HepG2 (cell line): ENCODE measurements at regions of chr14 and their contacts with region 1.

Region 1: GRCh38 chr14:65412032-65412846 is at the start of gene FUT8:
- DNase-seq: peak; percentile 81
- ATAC-seq: peak; percentile 92
- H3K4me3 ChIP-seq: peak within 1 kb of the TSS; percentile 86 to 94 (median 93)
- H3K27ac ChIP-seq: peak within 1 kb of the TSS; percentile 59
- H3K4me1 ChIP-seq: peaks cover 23% of the 10 kb centered on the region
- H3K27me3 ChIP-seq: no peaks in the 10 kb centered on the region
- CTCF ChIP-seq: peak; percentile 88
- EP300 ChIP-seq: 0 out of 4 replicates have a peak, but pooled peaks of 1 of the 2 experiments have one; percentile 13
- POLR2A ChIP-seq: peak; percentile 63 to 70; a peak in 3 of 4 replicates
- RAD21 ChIP-seq: peak; percentile 91
- total RNA-seq, gene FUT8: 14.9 and 17.5 TPM in 2 replicates

Region 2: DNA sequence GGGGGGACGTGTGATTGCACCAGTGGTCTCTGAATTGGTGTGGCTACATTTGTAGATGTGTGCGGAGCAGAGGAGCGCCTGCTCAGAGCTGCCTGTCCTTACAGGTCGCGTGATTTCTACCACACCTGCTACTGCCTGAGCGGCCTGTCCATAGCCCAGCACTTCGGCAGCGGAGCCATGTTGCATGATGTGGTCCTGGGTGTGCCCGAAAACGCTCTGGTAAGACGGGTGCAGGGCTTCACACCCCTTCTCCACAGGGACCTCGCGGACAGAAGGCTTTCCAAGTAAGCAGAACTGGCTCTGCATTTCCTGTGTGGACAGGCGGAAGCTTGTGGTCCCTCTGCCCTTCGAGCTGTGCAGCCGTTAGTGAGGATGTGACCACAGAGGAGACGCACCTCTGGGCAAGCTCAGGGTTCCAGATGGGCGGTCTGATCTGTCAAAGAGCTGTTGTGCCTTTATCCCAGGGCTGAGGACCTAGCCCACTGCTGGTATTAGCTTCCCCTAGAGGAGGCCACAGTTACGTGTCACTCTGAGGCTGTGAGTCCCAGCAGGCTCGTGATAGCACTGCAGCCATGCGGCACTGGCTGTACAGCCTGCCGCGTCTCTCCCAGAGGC is 357.7 kb before region 1 on chr14:
- CTCF ChIA-PET with region 1: no interaction called
- POLR2A ChIA-PET with region 1: no interaction called
- in situ Hi-C with region 1: no loop called
- intact Hi-C with region 1: no loop called
- DNase-seq: no peak
- ATAC-seq: peak; percentile 61
- H3K4me3 ChIP-seq: no peak overlapping the region
- H3K27ac ChIP-seq: no peak overlapping the region
- H3K4me1 ChIP-seq: no peaks in the 10 kb centered on the region
- H3K27me3 ChIP-seq: no peaks in the 10 kb centered on the region
- CTCF ChIP-seq: no peak
- EP300 ChIP-seq: no peak
- POLR2A ChIP-seq: no peak
- RAD21 ChIP-seq: no peak

Region 3: GRCh38 chr14:65131301-65131701 is 280.9 kb before region 1 on chr14:
- CTCF ChIA-PET with region 1: no interaction called
- POLR2A ChIA-PET with region 1: no interaction called
- in situ Hi-C with region 1: no loop called
- intact Hi-C with region 1: no loop called
- DNase-seq: no peak
- ATAC-seq: no peak
- H3K4me3 ChIP-seq: no peak overlapping the region
- H3K27ac ChIP-seq: no peak overlapping the region
- H3K4me1 ChIP-seq: peaks cover 29% of the 10 kb centered on the region
- H3K27me3 ChIP-seq: no peaks in the 10 kb centered on the region
- CTCF ChIP-seq: no peak
- EP300 ChIP-seq: no peak
- POLR2A ChIP-seq: no peak
- RAD21 ChIP-seq: no peak

Region 4: DNA sequence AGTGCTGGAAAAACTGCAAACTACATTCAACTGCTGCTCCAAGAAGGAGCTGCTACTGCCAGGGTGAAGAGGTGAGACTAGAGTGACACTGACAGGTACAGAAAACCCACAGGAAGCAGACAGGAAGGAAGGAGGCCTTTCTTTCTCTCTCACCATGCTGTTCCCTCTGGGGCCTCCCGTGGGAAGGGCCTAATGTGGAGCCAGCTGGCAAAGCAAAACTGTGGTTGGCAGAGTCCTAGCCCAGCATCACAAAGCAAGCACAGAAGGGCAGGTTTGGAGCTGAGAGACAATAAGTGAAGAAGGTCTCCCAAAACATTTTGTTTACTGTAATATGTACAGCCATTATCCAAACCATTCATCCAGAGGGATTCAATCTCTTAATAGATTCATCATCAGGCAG is 187.4 kb before region 1 on chr14:
- CTCF ChIA-PET with region 1: interaction called, 3 read pairs
- POLR2A ChIA-PET with region 1: interaction called, 26 read pairs
- in situ Hi-C with region 1: loop called (anchors 5 kb)
- intact Hi-C with region 1: loop called (anchors 2 kb)
- DNase-seq: no peak
- ATAC-seq: no peak
- H3K4me3 ChIP-seq: no peak overlapping the region
- H3K27ac ChIP-seq: no peak overlapping the region
- H3K4me1 ChIP-seq: peaks cover 65% of the 10 kb centered on the region
- H3K27me3 ChIP-seq: no peaks in the 10 kb centered on the region
- CTCF ChIP-seq: no peak
- EP300 ChIP-seq: no peak
- POLR2A ChIP-seq: no peak
- RAD21 ChIP-seq: no peak

Region 5: GRCh38 chr14:65239143-65239937 is 172.9 kb before region 1 on chr14:
- CTCF ChIA-PET with region 1: no interaction called
- POLR2A ChIA-PET with region 1: interaction called, 22 read pairs
- in situ Hi-C with region 1: no loop called
- intact Hi-C with region 1: no loop called
- DNase-seq: peak; percentile 61
- ATAC-seq: peak; percentile 50
- H3K4me3 ChIP-seq: peak overlapping the region; percentile 6 to 65 (median 40); a peak in 5 of 6 replicates
- H3K27ac ChIP-seq: peak overlapping the region; percentile 66
- H3K4me1 ChIP-seq: peaks cover 75% of the 10 kb centered on the region
- H3K27me3 ChIP-seq: no peaks in the 10 kb centered on the region
- CTCF ChIP-seq: peak; percentile 26; the same call in 1 of the 2 replicates
- EP300 ChIP-seq: no peak
- POLR2A ChIP-seq: no peak; a peak in 1 of 4 replicates
- RAD21 ChIP-seq: no peak

Region 6: DNA sequence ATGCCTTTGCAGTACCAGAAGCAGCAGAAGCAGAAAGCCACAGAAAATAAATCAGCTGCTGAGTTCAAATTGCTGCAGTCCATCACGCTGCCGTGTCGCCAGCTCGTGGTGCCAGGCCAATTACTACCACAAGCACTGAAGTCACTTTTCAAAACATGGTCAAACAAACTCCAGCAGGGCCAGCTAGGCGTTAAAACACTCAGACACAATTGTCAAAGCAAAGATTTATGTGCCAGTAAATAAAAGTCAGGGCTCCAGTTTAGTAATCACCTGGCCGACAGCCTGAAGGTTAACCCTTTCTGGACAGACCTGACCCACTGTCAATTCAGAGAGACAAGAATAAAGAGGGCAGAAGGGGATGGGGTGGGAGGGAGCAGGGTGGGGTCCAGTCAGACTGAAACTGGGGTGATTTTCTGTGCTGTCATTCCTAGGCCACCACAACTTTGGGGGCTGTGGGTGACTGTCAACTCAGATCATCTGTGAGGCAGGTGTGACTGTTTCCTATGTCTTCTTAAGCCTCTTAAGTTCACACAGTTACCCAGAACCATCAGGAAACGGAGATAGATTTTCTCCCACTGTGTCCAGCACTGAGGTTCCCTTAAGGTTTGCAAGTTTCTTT is 109.6 kb before region 1 on chr14:
- CTCF ChIA-PET with region 1: no interaction called
- POLR2A ChIA-PET with region 1: interaction called, 12 read pairs
- in situ Hi-C with region 1: no loop called
- intact Hi-C with region 1: no loop called
- DNase-seq: no peak
- ATAC-seq: no peak; the same call in 2 of the 3 replicates
- H3K4me3 ChIP-seq: peak overlapping the region; percentile 1 to 48 (median 36); a peak in 4 of 6 replicates
- H3K27ac ChIP-seq: peak overlapping the region; percentile 39
- H3K4me1 ChIP-seq: peaks cover 57% of the 10 kb centered on the region
- H3K27me3 ChIP-seq: no peaks in the 10 kb centered on the region
- CTCF ChIP-seq: no peak
- EP300 ChIP-seq: no peak
- POLR2A ChIP-seq: no peak
- RAD21 ChIP-seq: no peak

Region 7: DNA sequence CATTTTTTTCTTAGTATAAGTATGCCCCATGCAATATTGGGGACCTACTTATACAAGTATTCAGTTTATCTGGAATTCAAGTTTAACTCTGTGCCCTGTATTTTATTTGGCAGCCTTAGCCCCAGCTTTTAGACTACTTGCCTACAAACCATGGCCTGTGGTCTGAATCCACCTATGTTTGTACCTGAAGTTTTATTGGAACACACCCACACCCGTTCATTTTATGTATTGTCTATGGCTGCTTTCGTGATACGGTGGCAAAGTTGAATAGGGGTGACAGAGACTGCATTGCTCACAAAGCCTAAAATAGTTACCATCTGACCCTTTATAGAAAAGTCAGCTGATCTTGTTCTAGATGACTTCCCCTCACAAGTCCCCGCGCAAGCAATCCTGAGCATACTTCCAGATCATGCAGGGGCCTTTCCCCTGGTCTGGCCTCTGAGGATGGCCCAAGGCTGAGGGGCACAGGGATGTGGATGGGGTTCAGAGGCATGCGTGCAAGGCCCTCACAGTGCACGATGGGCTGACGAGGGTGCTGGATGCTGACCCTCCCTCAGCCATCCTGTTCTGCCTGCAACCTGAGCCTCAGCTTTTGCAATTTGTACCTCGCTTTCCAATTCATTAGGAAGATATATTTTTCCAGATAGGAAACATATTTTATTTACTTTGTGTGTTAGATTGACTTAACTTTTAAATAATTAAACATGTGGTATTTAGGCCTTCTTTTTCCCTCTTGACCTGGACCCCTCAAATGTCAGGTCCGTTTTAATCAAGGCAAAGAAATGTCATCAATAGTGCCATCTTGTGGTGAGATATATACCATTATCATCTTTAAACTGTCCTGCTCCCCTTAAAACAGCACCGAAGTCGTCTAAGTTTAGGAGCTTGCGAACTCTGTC is 546.7 kb after region 1 on chr14:
- CTCF ChIA-PET with region 1: no interaction called
- POLR2A ChIA-PET with region 1: no interaction called
- in situ Hi-C with region 1: loop called (anchors 10 kb)
- intact Hi-C with region 1: loop called (anchors 2 kb)
- DNase-seq: peak; percentile 16
- ATAC-seq: peak; percentile 68
- H3K4me3 ChIP-seq: no peak overlapping the region
- H3K27ac ChIP-seq: no peak overlapping the region
- H3K4me1 ChIP-seq: no peaks in the 10 kb centered on the region
- H3K27me3 ChIP-seq: peaks cover 0 to 1% of the 10 kb centered on the region in 2 experiments; a peak in 2 of 5 replicates
- CTCF ChIP-seq: peak; percentile 62
- EP300 ChIP-seq: no peak
- POLR2A ChIP-seq: no peak
- RAD21 ChIP-seq: no peak